Activated T-helper 1 cell treated with anti-CD3 and anti-CD28 coated beads, Interleukin-12 subunit alpha, Interleukin-12 subunit beta, Interleukin-2, Interleukin-4 antibody, amounts not matched to agents 30 ng/mL and 10 ng/mL and 1 ng/mL, durations not matched to agents 14 hours and 24 hours and 36 hours (primary cell): ENCODE measurements at regions of chr3 and their contacts with region 1.

Region 1: GRCh38 chr3:50436114-50436674 is 67.2 kb downstream of the CACNA2D2 start:
- DNase-seq: peak; percentile 67
- H3K4me3 Mint-ChIP-seq: no peak overlapping the region
- H3K27ac Mint-ChIP-seq: no peak overlapping the region
- H3K4me1 Mint-ChIP-seq: peaks cover 5% of the 10 kb centered on the region
- H3K27me3 Mint-ChIP-seq: peaks cover 2% of the 10 kb centered on the region

Region 2: GRCh38 chr3:50350527-50351322 is 85.5 kb before region 1 on chr3 and contains the starts of genes CYB561D2 and NPRL2:
- intact Hi-C with region 1: loop called (anchors 1 kb)
- DNase-seq: peak; percentile 100
- H3K4me3 Mint-ChIP-seq: peak within 1 kb of the TSS; percentile 95
- H3K27ac Mint-ChIP-seq: peak within 1 kb of the TSS; percentile 95
- H3K4me1 Mint-ChIP-seq: peaks cover 55% of the 10 kb centered on the region
- H3K27me3 Mint-ChIP-seq: no peaks in the 10 kb centered on the region
- total RNA-seq, gene CYB561D2: 30.0 and 35.9 TPM in 2 replicates
- total RNA-seq, gene NPRL2: 43.7 and 46.6 TPM in 2 replicates

Region 3: DNA sequence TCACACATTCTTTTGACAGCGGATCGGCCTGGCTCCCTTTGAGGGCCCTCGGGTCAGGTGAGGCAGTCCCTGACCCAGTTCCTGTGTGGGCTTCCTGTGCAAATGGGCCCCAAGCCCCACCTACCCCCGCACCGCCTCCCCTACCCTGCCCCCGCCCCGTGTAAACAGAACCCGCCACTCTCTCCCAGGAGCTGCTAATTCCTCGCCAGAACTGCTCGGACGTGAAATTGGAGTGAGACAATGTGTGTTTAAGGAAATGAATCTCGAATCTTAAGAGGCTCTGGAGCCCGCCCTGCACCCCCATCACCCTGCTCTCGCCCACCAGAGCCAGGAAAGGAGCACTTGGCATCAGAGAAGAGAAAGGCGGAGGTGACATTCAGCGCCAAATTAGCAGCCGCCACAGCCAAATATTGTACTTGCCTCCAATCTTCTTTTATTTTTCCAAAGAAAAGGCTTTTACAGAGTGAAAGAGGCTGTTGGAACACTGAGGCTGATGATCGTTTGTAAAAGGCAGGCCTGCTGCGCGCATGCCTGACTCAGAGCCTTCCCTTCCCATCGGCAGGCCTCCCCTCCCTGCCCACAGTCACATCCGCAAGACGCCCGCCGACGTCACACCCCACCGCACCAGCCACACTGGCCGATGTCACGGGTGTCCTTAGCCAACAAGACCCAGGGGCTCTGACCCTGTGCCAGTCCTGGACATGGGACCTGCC is 14.2 kb after region 1 on chr3:
- intact Hi-C with region 1: loop called (anchors 2 kb)
- DNase-seq: peak; percentile 70
- H3K4me3 Mint-ChIP-seq: peak overlapping the region; percentile 70
- H3K27ac Mint-ChIP-seq: peak overlapping the region; percentile 90
- H3K4me1 Mint-ChIP-seq: peaks cover 7% of the 10 kb centered on the region
- H3K27me3 Mint-ChIP-seq: no peaks in the 10 kb centered on the region

Region 4: DNA sequence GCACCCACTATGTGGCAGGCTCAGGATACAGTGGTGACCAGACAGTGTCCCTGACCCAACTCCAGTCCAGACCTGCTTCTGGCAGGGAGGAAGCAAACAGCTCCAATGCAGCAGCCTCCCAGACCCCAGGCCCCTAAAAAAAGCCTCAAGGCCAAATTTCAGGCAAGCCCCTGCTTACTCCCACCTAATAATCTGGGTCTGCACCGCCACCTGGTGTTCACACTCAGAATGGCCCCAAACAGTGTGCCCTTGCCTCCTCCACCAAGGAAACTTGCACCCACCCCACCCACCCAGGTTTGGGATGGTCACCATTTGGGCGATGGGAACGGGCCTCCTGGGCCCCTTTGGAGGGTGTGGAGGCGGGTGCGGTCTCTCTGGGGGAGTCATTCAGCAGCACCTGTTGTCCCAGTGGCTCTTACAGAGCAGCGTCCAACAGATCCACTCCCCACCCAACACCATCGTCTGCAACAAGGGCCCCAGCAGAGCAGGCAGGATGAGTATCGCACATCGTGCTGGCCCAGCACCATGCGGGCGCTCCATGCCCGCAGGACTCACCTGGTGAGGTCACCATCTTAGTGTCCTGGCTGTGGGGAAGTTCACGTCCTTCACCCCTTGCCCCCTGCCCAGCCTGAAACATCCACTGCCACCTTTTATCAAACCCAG is 114.0 kb after region 1 on chr3:
- intact Hi-C with region 1: loop called (anchors 1 kb)
- DNase-seq: peak; percentile 49
- H3K4me3 Mint-ChIP-seq: no peak overlapping the region
- H3K27ac Mint-ChIP-seq: no peak overlapping the region
- H3K4me1 Mint-ChIP-seq: no peaks in the 10 kb centered on the region
- H3K27me3 Mint-ChIP-seq: peaks cover under 1% of the 10 kb centered on the region

Region 5: GRCh38 chr3:51371943-51372557 is 935.9 kb after region 1 on chr3:
- intact Hi-C with region 1: loop called (anchors 5 kb)
- DNase-seq: no peak
- H3K4me3 Mint-ChIP-seq: no peak overlapping the region
- H3K27ac Mint-ChIP-seq: no peak overlapping the region
- H3K4me1 Mint-ChIP-seq: no peaks in the 10 kb centered on the region
- H3K27me3 Mint-ChIP-seq: peaks cover 6% of the 10 kb centered on the region